Right ventricle myocardium inferior (tissue), 1 donor: ENCODE measurements at regions of chr5 and their contacts with region 1.

Region 1: DNA sequence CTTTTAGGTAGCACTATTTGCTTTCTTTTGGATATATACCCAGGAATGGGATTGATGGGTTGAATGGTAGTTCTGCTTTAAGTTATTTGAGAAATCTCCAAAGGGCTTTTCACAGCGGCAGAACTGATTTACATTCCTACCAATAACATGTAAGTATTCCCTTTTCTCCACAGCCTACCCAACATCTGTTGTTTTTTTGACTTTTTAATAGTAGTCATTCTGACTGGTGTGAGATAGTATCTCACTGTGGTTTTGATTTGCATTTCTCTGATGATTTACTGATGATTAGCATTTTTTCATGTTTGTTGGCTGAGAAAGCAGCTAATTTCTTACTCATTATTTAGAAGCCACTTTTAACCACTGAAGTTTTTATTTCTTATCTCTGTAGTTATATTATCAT is 221.1 kb upstream of the ACTBL2 start:
- DNase-seq: no peak
- ATAC-seq: no peak

Region 2: DNA sequence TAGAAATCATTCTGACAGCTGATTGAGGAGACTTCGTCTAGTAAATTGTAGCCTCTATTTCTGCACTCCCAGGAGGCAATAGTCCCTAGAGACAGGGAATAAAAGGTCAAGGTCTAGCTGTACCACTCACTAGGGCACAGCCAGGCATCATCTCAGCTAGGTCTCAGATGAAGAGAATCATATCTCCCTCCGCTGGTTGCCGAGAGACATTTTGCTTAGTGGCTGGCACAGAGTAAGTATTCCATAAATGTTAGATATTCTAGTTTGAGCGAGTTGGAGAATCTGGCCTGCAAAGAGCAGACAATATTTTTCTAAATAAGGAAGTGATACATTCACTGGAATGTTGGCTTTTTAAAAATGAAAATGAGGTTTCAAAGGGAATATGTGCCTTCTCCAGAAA is 40.7 kb before region 1 on chr5:
- intact Hi-C with region 1: loop called (anchors 1 kb)
- DNase-seq: no peak
- ATAC-seq: peak; percentile 88

Region 3: GRCh38 chr5:58080558-58080957 is 376.8 kb after region 1 on chr5:
- intact Hi-C with region 1: no loop called
- DNase-seq: no peak
- ATAC-seq: no peak